CD8-positive, alpha-beta T cell (primary cell): ENCODE measurements at regions of chr17 and their contacts with region 1.

Region 1: DNA sequence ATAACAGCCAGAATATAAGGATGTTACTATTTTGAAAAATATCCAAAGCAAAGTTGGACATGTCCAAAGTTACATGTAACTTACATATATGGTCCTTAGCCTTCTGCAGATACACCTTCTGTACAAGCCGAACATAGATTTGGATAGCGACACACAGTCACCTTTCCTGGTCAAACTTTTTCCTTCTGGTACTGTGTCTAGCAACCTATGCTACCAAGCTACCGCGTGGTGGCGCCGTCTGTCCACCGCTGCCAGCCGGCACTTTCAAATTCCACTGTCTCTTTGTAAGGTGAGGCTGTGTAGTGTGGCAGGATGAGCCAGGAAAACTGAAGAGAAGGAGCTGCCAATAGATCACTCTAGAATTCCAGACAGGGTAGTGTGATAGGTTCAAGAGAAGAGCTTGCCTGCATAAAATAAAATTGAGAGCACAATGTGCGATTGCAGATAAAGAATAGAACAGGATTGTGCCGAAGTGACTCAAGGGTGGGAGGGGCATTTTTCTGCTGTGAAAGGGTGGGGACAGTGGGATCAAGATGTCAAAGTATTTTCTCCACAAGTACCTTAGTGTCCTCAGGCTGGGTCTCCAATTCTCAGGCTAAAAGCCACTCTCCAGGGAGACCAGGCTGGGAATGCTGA is 366.9 kb downstream of the SLC39A11 start:
- DNase-seq: peak in 8 of 9 experiments; percentile 10 to 65 (median 48)
- ATAC-seq: peak; percentile 37
- H3K4me3 ChIP-seq: no peak overlapping the region
- H3K4me3 Mint-ChIP-seq: peak overlapping the region; percentile 7
- H3K27ac ChIP-seq: no peak overlapping the region
- H3K27ac Mint-ChIP-seq: peak overlapping the region; percentile 28
- H3K4me1 ChIP-seq: peaks cover 29% of the 10 kb centered on the region
- H3K4me1 Mint-ChIP-seq: peaks cover 32% of the 10 kb centered on the region
- H3K27me3 ChIP-seq: no peaks in the 10 kb centered on the region
- H3K27me3 Mint-ChIP-seq: no peaks in the 10 kb centered on the region
- CTCF ChIP-seq: peak; percentile 92

Region 2: GRCh38 chr17:72456026-72456569 is 269.5 kb before region 1 on chr17:
- CTCF ChIA-PET with region 1: no interaction called
- POLR2A ChIA-PET with region 1: no interaction called
- intact Hi-C with region 1: no loop called
- DNase-seq: no peak
- ATAC-seq: no peak
- H3K4me3 ChIP-seq: no peak overlapping the region
- H3K4me3 Mint-ChIP-seq: no peak overlapping the region
- H3K27ac ChIP-seq: no peak overlapping the region
- H3K27ac Mint-ChIP-seq: no peak overlapping the region
- H3K4me1 ChIP-seq: no peaks in the 10 kb centered on the region
- H3K4me1 Mint-ChIP-seq: no peaks in the 10 kb centered on the region
- H3K27me3 ChIP-seq: no peaks in the 10 kb centered on the region
- H3K27me3 Mint-ChIP-seq: peaks cover 2% of the 10 kb centered on the region
- CTCF ChIP-seq: no peak

Region 3: GRCh38 chr17:72556944-72557826 is 168.4 kb before region 1 on chr17:
- CTCF ChIA-PET with region 1: interaction called, 20 read pairs
- POLR2A ChIA-PET with region 1: no interaction called
- intact Hi-C with region 1: loop called (anchors 1 to 5 kb)
- DNase-seq: peak; percentile 15 to 62 (median 47)
- ATAC-seq: no peak
- H3K4me3 ChIP-seq: no peak overlapping the region
- H3K4me3 Mint-ChIP-seq: no peak overlapping the region
- H3K27ac ChIP-seq: no peak overlapping the region
- H3K27ac Mint-ChIP-seq: no peak overlapping the region
- H3K4me1 ChIP-seq: no peaks in the 10 kb centered on the region
- H3K4me1 Mint-ChIP-seq: no peaks in the 10 kb centered on the region
- H3K27me3 ChIP-seq: no peaks in the 10 kb centered on the region
- H3K27me3 Mint-ChIP-seq: peaks cover 2% of the 10 kb centered on the region
- CTCF ChIP-seq: peak; percentile 61

Region 4: GRCh38 chr17:72922219-72922618 is 196.7 kb after region 1 on chr17:
- CTCF ChIA-PET with region 1: no interaction called
- POLR2A ChIA-PET with region 1: no interaction called
- intact Hi-C with region 1: no loop called
- DNase-seq: no peak
- ATAC-seq: no peak
- H3K4me3 ChIP-seq: no peak overlapping the region
- H3K4me3 Mint-ChIP-seq: no peak overlapping the region
- H3K27ac ChIP-seq: no peak overlapping the region
- H3K27ac Mint-ChIP-seq: no peak overlapping the region
- H3K4me1 ChIP-seq: no peaks in the 10 kb centered on the region
- H3K4me1 Mint-ChIP-seq: no peaks in the 10 kb centered on the region
- H3K27me3 ChIP-seq: no peaks in the 10 kb centered on the region
- H3K27me3 Mint-ChIP-seq: no peaks in the 10 kb centered on the region
- CTCF ChIP-seq: no peak

Region 5: DNA sequence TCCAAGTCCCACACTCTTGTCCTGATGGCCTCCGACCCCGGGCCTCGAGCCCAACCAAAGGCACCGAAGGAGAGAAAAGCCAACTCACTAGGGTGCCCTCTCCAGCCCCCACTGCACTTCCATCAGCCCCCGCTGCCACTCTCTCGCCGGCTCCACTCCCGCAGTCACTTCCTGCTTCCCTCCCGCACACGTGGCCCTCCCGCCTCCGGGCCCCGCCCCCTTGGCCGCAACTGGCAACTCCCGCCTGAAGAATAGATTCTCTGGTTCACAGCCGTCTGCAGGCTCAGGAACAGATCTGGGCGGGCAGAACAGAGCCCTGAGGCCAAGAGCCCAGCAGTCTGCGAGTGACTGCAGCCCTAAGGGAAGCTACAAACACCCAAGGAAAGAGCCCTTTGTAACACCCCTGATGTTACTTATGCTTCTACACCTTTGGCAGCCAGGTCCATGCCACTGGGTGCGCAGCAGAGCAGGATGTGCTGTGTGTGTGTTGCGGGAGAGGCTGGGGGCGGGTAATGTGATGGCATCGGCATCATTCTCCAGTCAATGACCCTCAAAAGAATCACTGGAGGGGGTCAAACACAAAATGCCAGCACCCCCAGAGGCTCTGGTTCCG is 367.1 kb after region 1 on chr17 and contains the start of gene SLC39A11:
- CTCF ChIA-PET with region 1: interaction called, 9 read pairs
- POLR2A ChIA-PET with region 1: no interaction called
- intact Hi-C with region 1: loop called in 1 of 2 experiments (anchors 2 kb)
- DNase-seq: peak; percentile 72 to 95 (median 89)
- ATAC-seq: peak; percentile 95
- H3K4me3 ChIP-seq: peak within 1 kb of the TSS; percentile 73 to 74
- H3K4me3 Mint-ChIP-seq: peak within 1 kb of the TSS; percentile 98
- H3K27ac ChIP-seq: peak within 1 kb of the TSS; percentile 41 to 58
- H3K27ac Mint-ChIP-seq: peak within 1 kb of the TSS; percentile 94
- H3K4me1 ChIP-seq: peaks cover 17% of the 10 kb centered on the region
- H3K4me1 Mint-ChIP-seq: peaks cover 33% of the 10 kb centered on the region
- H3K27me3 ChIP-seq: no peaks in the 10 kb centered on the region
- H3K27me3 Mint-ChIP-seq: no peaks in the 10 kb centered on the region
- CTCF ChIP-seq: no peak
- total RNA-seq, gene SLC39A11: 8.4 TPM

Region 6: GRCh38 chr17:73192894-73193701 is 467.5 kb after region 1 on chr17 and contains the start of gene COG1:
- CTCF ChIA-PET with region 1: interaction called, 26 read pairs
- POLR2A ChIA-PET with region 1: no interaction called
- intact Hi-C with region 1: loop called in 1 of 2 experiments (anchors 1 kb)
- DNase-seq: peak; percentile 76 to 95 (median 89)
- ATAC-seq: peak; percentile 87
- H3K4me3 ChIP-seq: peak within 1 kb of the TSS; percentile 81 to 91
- H3K4me3 Mint-ChIP-seq: peak within 1 kb of the TSS; percentile 98
- H3K27ac ChIP-seq: peak within 1 kb of the TSS; percentile 79 to 83
- H3K27ac Mint-ChIP-seq: peak within 1 kb of the TSS; percentile 95
- H3K4me1 ChIP-seq: peaks cover 20% of the 10 kb centered on the region
- H3K4me1 Mint-ChIP-seq: peaks cover 27% of the 10 kb centered on the region
- H3K27me3 ChIP-seq: no peaks in the 10 kb centered on the region
- H3K27me3 Mint-ChIP-seq: no peaks in the 10 kb centered on the region
- CTCF ChIP-seq: no peak
- total RNA-seq, gene COG1: 91.3 to 95.6 TPM

Region 7: DNA sequence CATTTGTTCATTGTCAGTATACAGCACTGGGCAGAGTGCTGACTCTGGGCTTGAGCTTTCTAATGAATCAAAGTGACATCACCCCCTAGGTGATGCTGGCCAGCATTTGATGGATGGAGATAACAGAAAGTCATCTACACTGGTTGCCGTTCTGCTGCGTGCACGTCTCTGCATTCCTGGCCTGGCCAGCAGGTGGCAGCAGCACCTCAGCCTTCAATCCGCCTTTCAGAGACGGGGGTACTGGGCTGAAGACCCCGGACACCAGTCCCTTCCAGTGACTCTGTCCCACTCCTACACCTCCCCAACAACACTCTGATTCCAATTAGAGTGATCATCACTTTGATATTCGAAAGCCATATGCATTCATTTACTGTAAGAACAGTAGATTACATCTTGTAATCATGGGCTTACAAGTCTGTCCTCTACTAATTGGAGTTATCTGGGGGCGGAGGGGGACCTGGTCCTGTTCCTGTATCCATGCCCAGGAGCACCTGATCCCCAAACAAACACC is 530.2 kb after region 1 on chr17:
- CTCF ChIA-PET with region 1: interaction called, 18 read pairs
- POLR2A ChIA-PET with region 1: no interaction called
- intact Hi-C with region 1: loop called (anchors 1 to 5 kb)
- DNase-seq: peak; percentile 18 to 74 (median 59)
- ATAC-seq: peak; percentile 74
- H3K4me3 ChIP-seq: no peak overlapping the region
- H3K4me3 Mint-ChIP-seq: no peak overlapping the region
- H3K27ac ChIP-seq: no peak overlapping the region
- H3K27ac Mint-ChIP-seq: no peak overlapping the region
- H3K4me1 ChIP-seq: no peaks in the 10 kb centered on the region
- H3K4me1 Mint-ChIP-seq: peaks cover 4% of the 10 kb centered on the region
- H3K27me3 ChIP-seq: no peaks in the 10 kb centered on the region
- H3K27me3 Mint-ChIP-seq: peaks cover 2% of the 10 kb centered on the region
- CTCF ChIP-seq: peak; percentile 98

Region 8: DNA sequence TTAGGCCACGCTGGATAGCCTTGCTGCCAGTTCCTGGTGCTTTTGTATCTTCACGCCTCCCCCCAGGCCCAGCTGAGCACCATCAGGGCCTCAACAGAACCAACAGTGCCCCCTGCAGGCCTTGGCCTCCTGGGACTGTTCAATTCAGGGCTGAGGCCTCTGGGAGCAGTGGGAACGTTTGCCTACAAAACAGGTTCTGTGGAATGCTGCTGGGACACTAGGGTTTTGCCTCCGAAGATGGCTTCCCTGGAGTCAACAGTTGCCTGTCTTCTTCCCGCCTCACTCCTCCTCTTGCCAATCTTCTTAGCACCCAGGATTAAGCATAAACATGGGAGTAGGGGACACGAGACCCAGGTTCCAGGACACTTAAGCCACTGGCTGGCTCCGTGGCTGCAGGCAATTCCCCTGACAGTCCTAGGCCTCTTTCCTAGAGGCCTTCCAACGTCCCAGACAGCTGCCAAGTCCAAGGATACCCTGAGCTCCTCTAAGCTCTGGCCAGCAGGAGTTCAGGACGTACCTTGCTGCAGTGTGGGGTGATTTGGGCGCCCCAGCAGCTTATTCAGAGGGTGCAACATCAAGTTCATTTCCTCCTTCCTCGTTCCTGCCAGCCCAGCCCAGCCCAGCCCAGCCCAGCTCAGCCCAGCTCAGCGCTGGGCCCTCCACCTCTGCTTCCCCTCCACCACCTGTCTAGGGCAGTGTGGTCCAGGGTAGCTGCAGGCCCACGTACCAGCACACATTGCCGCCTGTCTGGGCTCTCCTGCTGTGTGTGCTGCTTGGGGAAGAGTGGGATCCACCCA is 1231.3 kb after region 1 on chr17:
- CTCF ChIA-PET with region 1: no interaction called
- POLR2A ChIA-PET with region 1: no interaction called
- intact Hi-C with region 1: loop called in 1 of 2 experiments (anchors 10 kb)
- DNase-seq: peak; percentile 13 to 77 (median 53)
- ATAC-seq: peak; percentile 54
- H3K4me3 ChIP-seq: no peak overlapping the region
- H3K4me3 Mint-ChIP-seq: no peak overlapping the region
- H3K27ac ChIP-seq: no peak overlapping the region
- H3K27ac Mint-ChIP-seq: no peak overlapping the region
- H3K4me1 ChIP-seq: peaks cover 4% of the 10 kb centered on the region
- H3K4me1 Mint-ChIP-seq: peaks cover 3% of the 10 kb centered on the region
- H3K27me3 ChIP-seq: peaks cover 9 to 23% of the 10 kb centered on the region in 2 experiments
- H3K27me3 Mint-ChIP-seq: peaks cover 3% of the 10 kb centered on the region
- CTCF ChIP-seq: peak; percentile 35